Calu3 (cell line): ENCODE measurements at regions of chr3 and their contacts with region 1.

Region 1: DNA sequence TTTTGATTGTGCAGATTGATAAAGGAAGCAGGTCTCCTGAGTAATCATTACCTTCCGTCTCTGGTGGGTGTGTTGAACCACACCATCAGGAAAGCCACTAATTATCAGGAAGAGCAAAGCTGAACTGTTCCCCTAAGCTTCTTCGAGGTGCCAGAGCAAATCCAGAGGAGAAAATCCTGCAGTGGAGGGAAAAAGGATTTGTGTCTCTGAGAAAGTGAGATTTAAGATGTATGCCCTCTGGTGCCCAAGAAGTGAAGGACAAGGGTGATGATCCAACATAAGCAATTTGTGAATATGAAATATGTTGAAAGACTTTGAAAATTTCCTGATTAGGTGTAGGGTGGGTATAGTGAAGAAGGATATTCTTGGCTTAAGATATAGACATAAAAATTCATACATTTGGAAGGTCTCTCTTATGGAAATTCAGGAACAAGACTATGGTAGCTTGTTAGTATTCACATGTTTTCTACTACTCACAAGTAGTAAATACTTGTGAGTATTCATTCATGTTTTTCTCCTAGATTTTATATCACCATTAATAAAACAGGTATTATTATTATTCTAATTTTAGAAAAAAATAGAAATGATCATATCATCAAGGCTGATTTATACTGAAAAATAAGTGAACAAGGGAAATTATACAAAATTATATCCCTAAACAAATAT is 34.8 kb downstream of the COMMD2 start:
- DNase-seq: peak; percentile 74
- H3K4me3 Mint-ChIP-seq: peak overlapping the region; percentile 20
- H3K27ac Mint-ChIP-seq: peak overlapping the region; percentile 58
- H3K4me1 Mint-ChIP-seq: peaks cover 9% of the 10 kb centered on the region
- H3K27me3 Mint-ChIP-seq: no peaks in the 10 kb centered on the region
- CTCF ChIP-seq: peak; percentile 72

Region 2: GRCh38 chr3:149527531-149528339 is 189.8 kb before region 1 on chr3:
- CTCF ChIA-PET with region 1: interaction called, 5 read pairs
- intact Hi-C with region 1: loop called (anchors 1 kb)
- DNase-seq: no peak
- H3K4me3 Mint-ChIP-seq: no peak overlapping the region
- H3K27ac Mint-ChIP-seq: peak overlapping the region; percentile 75
- H3K4me1 Mint-ChIP-seq: peaks cover 32% of the 10 kb centered on the region
- H3K27me3 Mint-ChIP-seq: no peaks in the 10 kb centered on the region
- CTCF ChIP-seq: no peak

Region 3: GRCh38 chr3:149547938-149548668 is 169.4 kb before region 1 on chr3:
- CTCF ChIA-PET with region 1: no interaction called
- intact Hi-C with region 1: no loop called
- DNase-seq: peak; percentile 71
- H3K4me3 Mint-ChIP-seq: peak overlapping the region; percentile 48
- H3K27ac Mint-ChIP-seq: peak overlapping the region; percentile 96
- H3K4me1 Mint-ChIP-seq: peaks cover 85% of the 10 kb centered on the region
- H3K27me3 Mint-ChIP-seq: no peaks in the 10 kb centered on the region
- CTCF ChIP-seq: no peak

Region 4: DNA sequence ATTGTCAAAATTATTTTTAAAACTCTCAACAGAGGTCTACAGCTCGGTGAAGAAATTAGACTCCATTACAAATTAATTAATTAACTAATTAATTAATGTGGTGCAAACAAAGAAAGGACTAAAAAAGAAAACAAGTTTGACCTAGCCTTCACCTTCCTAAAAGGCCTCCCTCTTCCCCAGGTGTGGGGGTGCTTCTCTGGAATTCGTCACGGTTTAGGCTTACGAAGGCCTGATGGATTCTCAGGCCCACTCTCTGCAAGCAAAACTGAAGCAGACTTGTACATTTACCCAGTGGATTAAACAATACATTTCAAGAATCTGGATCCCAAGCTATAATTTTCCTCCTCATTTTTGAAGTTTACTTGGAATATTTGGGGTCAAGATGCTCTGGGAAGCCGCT is 154.4 kb before region 1 on chr3:
- CTCF ChIA-PET with region 1: no interaction called
- intact Hi-C with region 1: no loop called
- DNase-seq: no peak
- H3K4me3 Mint-ChIP-seq: no peak overlapping the region
- H3K27ac Mint-ChIP-seq: peak overlapping the region; percentile 7
- H3K4me1 Mint-ChIP-seq: peaks cover 76% of the 10 kb centered on the region
- H3K27me3 Mint-ChIP-seq: no peaks in the 10 kb centered on the region
- CTCF ChIP-seq: no peak

Region 5: DNA sequence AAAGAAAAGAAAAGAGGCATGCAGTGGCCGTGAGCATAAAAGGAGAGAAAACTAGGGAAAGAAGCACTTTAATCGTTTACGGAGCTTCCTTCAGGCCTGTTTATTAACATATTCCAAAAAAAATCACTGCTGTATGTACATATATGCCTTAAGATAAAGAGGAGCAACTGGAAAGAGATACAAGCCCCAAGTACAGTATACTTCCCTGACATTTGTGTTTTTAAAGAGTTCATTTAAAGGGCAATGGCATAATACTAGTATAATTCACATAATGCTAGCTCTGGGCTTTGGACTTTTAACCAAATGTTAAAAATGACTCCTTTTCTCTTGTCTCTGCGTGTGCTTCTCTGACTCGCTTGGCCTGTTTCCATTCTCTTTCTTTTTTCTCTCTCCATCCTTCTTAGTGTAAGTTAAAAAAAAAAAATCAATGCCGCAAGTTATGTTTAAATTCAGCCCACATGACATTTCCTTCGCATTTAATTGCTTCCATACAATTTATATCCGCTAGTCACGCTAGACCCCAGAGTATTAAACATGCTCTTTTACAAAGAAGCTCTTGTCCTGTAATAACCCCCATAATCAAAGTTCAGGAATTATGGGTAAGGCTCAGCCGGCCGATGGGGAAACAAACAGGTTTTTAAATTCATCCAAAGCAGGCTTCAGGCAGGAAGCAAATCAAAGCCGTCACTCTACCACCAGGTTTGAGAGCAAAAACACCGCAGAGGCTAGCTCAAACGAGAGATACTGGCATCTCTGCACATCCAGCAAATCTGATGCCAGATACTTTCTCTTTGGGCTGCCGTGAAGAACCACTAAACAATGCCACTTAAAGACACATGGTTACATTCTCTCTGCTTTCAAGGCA is 79.1 kb before region 1 on chr3:
- CTCF ChIA-PET with region 1: interaction called, 3 read pairs
- intact Hi-C with region 1: loop called (anchors 2 kb)
- DNase-seq: peak; percentile 65
- H3K4me3 Mint-ChIP-seq: peak overlapping the region; percentile 60
- H3K27ac Mint-ChIP-seq: peak overlapping the region; percentile 78
- H3K4me1 Mint-ChIP-seq: peaks cover 86% of the 10 kb centered on the region
- H3K27me3 Mint-ChIP-seq: no peaks in the 10 kb centered on the region
- CTCF ChIP-seq: no peak